ENCODE measurements at regions of chr14 and their contacts with region 1.

Region 1: DNA sequence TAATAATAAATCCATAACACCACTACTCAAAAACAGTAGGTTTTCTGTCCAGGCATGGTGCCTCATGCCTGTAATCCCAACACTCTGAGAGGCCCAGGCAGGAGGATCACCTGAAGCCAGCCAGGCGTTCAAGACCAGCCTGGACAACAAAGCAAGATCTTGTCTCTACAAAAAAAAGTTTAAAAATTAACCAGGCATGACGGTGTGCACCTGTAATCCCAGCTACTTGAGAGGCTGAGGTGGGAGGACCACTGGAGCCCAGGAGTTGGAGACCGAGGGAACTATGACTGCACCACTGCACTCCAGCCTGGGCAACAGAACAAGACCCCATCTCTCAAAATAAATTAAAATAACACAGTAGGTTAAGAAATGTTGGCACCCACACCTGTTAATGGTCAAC is 44.5 kb upstream of the AP4S1 start:
- H3K4me3 Mint-ChIP-seq: no peak overlapping the region
- H3K27ac Mint-ChIP-seq: no peak overlapping the region
- H3K4me1 Mint-ChIP-seq: peaks cover 16% of the 10 kb centered on the region
- H3K27me3 Mint-ChIP-seq: no peaks in the 10 kb centered on the region

Region 2: GRCh38 chr14:30943694-30944093 is 37.3 kb before region 1 on chr14:
- intact Hi-C with region 1: no loop called
- H3K4me3 Mint-ChIP-seq: no peak overlapping the region
- H3K27ac Mint-ChIP-seq: no peak overlapping the region
- H3K4me1 Mint-ChIP-seq: no peaks in the 10 kb centered on the region
- H3K27me3 Mint-ChIP-seq: no peaks in the 10 kb centered on the region

Region 3: DNA sequence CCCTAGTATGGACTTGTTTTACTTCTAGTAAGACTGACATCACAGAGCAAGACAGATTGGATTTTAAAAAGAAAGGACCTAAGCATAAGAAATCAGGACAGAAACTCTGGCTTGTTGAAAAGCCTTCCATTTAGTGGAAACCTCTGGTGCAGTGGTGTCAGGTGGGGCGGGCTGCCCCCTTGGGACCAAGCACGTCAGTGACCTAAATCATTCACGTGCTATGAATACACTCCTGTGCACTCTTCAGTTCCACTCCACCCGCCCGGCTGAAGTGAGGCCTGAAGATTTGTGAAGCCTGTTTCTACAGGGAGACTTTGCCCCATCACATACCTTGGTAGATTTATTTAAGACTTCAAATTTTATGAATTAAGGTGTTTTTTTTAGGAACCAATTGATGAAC is 103.4 kb after region 1 on chr14:
- intact Hi-C with region 1: loop called (anchors 1 kb)
- H3K4me3 Mint-ChIP-seq: no peak overlapping the region
- H3K27ac Mint-ChIP-seq: no peak overlapping the region
- H3K4me1 Mint-ChIP-seq: no peaks in the 10 kb centered on the region
- H3K27me3 Mint-ChIP-seq: no peaks in the 10 kb centered on the region

Region 4: DNA sequence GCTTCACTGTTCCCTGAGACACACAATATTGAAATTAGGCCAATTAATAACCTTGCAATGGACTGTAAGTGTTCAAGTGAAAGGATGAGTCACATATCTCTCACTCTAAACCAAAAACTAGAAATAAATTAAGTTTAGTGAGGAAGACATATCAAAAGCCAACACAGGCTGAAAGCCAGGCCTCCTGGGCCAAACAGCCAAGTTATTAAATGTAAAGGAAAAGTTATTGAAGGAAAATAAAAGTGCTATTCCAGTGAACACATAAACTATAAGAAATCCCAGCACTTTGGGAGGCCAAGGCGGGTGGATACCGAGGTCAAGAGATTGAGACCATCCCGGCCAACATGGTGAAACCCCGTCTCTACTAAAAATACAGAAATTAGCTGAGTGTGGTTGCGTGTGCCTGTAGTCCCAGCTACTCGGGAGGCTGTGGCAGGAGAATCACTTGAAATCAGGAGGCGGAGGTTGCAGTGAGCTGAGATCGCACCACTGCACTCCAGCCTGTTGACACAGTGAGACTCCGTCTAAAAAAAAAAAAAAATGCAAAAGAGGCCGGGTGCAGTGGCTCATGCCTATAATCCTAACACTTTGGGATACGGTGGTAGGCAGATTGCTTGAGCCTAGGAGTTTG is 449.8 kb after region 1 on chr14:
- intact Hi-C with region 1: no loop called
- H3K4me3 Mint-ChIP-seq: no peak overlapping the region
- H3K27ac Mint-ChIP-seq: no peak overlapping the region
- H3K4me1 Mint-ChIP-seq: peaks cover 3% of the 10 kb centered on the region
- H3K27me3 Mint-ChIP-seq: no peaks in the 10 kb centered on the region